ENCODE measurements at regions of chr10 and their contacts with region 1.

Region 1: DNA sequence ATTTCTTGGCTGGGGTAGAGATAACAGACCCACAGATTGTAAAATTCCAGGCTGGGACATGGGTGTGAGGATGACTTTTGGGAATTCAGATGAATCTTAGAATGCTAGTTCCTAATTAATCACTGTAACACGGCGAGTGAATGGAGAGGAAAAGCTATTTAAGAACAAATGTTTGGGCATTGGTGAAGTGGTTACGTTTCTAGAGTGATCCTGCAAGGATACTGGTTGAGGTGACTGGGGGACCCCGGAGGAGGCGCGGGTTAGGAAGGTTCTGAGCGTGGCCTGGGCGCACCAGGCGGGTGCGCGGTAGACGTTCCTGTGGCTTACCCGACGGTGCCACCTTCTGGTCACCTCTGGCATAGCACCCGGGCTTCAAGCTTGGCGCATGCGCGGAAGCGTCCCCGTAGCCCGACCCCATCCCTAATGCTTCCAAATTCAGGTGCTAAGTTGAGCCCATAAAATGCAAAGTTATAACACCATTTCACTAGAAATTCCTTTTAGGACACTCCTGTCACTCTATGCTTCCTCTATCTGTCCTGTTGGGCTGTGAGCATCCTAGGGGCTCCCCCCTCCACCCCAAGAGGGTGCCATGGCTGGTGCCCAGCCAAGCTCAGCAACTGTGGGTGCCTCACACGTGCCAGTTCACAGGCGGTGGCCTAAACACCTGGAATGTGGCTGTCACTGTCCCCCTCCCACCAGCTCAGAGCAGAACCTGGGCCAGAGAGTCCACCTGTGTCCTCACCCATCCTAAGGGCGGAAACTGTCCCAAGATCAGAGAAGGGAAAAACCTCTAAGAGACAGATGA is 104.5 kb downstream of the PTPRE start:
- DNase-seq: peak; percentile 79
- H3K4me3 Mint-ChIP-seq: peak overlapping the region; percentile 42
- H3K27ac Mint-ChIP-seq: peak overlapping the region; percentile 29
- H3K4me1 Mint-ChIP-seq: peaks cover 10% of the 10 kb centered on the region
- H3K27me3 Mint-ChIP-seq: peaks cover 2% of the 10 kb centered on the region

Region 2: DNA sequence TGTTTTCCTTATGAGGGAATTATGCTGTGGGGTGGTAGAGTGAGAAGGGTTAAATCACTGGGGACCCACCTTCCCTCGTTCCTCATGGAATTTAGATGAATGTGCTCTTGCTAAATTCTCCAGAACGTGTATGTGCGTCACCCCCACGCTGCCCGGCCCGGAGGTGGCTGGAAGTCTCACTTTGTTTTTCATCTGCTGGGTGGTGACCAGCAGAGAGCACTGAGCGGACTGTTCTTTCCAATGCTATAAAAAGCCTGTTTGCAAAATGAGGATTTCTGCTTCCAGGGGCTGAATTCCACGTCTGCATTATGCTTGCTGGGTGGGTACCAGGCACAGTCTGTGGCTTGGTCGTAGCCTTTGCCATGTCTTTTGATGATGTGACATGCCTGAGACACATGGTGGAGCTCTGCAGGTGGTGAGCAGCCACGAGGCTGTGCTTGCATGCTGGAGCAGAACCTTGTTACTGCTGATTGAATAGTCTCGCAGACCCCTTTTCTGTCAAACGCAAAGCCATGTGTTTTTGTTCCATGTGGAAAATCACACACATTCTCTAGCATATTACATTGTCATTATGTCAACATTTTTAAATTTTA is 783.1 kb before region 1 on chr10:
- intact Hi-C with region 1: no loop called
- DNase-seq: no peak
- H3K4me3 Mint-ChIP-seq: no peak overlapping the region
- H3K27ac Mint-ChIP-seq: no peak overlapping the region
- H3K4me1 Mint-ChIP-seq: no peaks in the 10 kb centered on the region
- H3K27me3 Mint-ChIP-seq: no peaks in the 10 kb centered on the region

Region 3: DNA sequence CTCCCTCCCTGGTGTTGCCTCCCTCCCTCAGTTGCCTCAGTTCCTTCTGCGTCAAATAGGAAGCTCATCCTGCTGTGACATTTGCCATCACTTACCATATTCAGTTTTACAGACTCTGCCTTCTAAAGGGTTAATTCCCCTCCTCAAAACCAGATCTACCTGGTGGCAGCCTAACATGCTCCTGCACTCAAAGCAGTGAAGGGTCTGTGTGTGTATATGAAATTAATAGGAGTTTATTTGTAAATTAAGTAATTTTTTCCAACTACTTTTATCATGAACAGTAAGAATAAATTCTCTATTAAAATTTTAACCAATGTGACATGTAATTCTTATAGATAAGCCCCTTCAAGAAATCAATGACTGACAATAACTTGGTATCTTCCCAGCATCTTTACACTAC is 656.4 kb before region 1 on chr10:
- intact Hi-C with region 1: no loop called
- DNase-seq: no peak
- H3K4me3 Mint-ChIP-seq: no peak overlapping the region
- H3K27ac Mint-ChIP-seq: no peak overlapping the region
- H3K4me1 Mint-ChIP-seq: no peaks in the 10 kb centered on the region
- H3K27me3 Mint-ChIP-seq: peaks cover 5% of the 10 kb centered on the region

Region 4: GRCh38 chr10:127715782-127716378 is 295.5 kb before region 1 on chr10:
- intact Hi-C with region 1: loop called (anchors 5 kb)
- DNase-seq: no peak
- H3K4me3 Mint-ChIP-seq: no peak overlapping the region
- H3K27ac Mint-ChIP-seq: no peak overlapping the region
- H3K4me1 Mint-ChIP-seq: no peaks in the 10 kb centered on the region
- H3K27me3 Mint-ChIP-seq: no peaks in the 10 kb centered on the region

Region 5: GRCh38 chr10:127872871-127873600 is 138.3 kb before region 1 on chr10:
- intact Hi-C with region 1: loop called (anchors 1 kb)
- DNase-seq: no peak
- H3K4me3 Mint-ChIP-seq: no peak overlapping the region
- H3K27ac Mint-ChIP-seq: no peak overlapping the region
- H3K4me1 Mint-ChIP-seq: peaks cover 14% of the 10 kb centered on the region
- H3K27me3 Mint-ChIP-seq: peaks cover 22% of the 10 kb centered on the region

Region 6: DNA sequence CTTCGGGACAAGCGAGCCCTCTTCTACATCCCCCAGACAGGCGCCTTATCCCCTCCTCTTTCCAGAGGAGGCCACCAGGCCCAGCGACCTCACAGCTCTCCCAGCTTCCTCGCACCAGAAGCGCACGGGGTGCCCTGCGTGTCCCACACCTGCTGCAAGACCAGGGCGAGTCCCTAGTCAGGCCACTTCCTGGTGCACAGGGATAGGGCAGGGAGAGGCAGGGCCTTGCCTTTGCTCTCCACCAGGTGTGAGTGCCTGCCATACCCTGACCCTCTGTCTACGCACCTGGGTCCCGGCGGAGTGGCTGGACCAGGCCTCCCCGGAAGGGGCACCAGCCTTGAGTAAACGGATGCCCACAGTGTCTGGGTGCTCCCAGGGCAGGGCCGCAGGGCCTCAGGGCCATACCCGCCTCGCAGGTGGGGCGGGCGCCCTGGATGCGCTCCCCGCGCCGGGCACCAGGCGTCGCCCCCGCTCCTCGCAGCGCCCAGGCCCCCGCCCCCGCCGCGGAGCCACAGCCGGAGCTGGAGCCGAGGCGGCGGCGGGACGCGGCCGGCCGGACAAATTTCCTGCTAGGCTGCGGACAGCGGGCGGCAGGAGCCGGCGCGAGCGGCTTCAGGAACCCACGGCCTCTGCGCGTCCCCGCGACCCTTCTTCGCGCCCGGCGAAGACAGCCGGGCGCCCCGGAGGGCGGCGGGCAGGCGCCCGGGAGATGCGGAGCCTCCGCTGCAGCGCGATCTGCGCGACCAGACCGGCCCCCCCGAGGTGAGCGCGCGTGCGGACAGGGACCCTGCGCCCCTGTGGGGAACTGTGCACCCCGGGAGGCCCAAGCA is 104.6 kb before region 1 on chr10 and contains the start of gene PTPRE:
- intact Hi-C with region 1: loop called (anchors 1 kb)
- DNase-seq: peak; percentile 66
- H3K4me3 Mint-ChIP-seq: peak within 1 kb of the TSS; percentile 66
- H3K27ac Mint-ChIP-seq: no peak within 1 kb of the TSS
- H3K4me1 Mint-ChIP-seq: no peaks in the 10 kb centered on the region
- H3K27me3 Mint-ChIP-seq: peaks cover 26% of the 10 kb centered on the region
- total RNA-seq, gene PTPRE: 40.8 and 41.8 TPM in 2 replicates

Region 7: GRCh38 chr10:128069351-128070051 is 58.1 kb after region 1 on chr10:
- intact Hi-C with region 1: loop called (anchors 1 kb)
- DNase-seq: peak; percentile 63
- H3K4me3 Mint-ChIP-seq: no peak overlapping the region
- H3K27ac Mint-ChIP-seq: no peak overlapping the region
- H3K4me1 Mint-ChIP-seq: peaks cover 41% of the 10 kb centered on the region
- H3K27me3 Mint-ChIP-seq: no peaks in the 10 kb centered on the region